ENCODE measurements at regions of chr2 and their contacts with region 1.

Region 1: GRCh38 chr2:118913803-118914645 is 28.0 kb upstream of the MARCO start:
- H3K4me3 Mint-ChIP-seq: no peak overlapping the region
- H3K27ac Mint-ChIP-seq: peak overlapping the region; percentile 59
- H3K4me1 Mint-ChIP-seq: peaks cover 38% of the 10 kb centered on the region
- H3K27me3 Mint-ChIP-seq: peaks cover 19% of the 10 kb centered on the region

Region 2: DNA sequence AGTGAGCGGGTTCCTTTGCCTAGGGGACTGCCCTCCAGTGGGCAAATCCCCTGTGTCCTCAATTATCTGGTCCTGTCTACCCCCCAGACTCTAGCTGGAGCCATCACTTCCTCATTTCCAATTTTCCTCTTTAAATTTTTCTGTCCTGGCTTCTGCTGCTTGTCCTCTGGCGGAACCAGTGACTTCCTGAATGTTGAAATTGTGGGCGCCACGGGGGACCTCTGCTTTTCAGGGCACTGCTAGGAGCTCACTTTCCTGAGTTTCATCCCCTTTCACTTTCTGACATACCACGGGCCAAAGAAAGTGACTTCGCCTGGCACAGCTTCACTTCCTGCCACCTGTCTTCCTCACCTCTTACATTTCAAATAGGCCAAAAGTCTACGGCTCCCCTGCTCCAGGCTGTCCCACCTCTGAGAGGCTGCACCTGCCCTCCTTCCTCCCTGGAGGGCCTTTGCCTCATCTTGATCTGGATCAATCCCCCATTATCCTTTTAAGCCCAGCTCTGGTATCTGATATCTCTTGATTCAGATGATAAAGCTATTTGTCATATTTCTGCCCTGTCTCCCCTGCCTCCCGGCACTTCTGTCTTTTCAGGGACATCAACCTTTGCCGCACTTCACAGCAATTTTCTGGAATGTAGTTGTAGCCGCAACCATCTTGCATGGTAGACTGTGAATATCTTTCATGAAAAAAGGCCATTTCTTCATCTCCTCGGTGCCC is 26.6 kb after region 1 on chr2:
- intact Hi-C with region 1: no loop called
- H3K4me3 Mint-ChIP-seq: peak overlapping the region; percentile 59
- H3K27ac Mint-ChIP-seq: peak overlapping the region; percentile 73
- H3K4me1 Mint-ChIP-seq: peaks cover 34% of the 10 kb centered on the region
- H3K27me3 Mint-ChIP-seq: no peaks in the 10 kb centered on the region

Region 3: GRCh38 chr2:118954297-118955060 is 40.5 kb after region 1 on chr2:
- intact Hi-C with region 1: no loop called
- H3K4me3 Mint-ChIP-seq: peak overlapping the region; percentile 45
- H3K27ac Mint-ChIP-seq: peak overlapping the region; percentile 98
- H3K4me1 Mint-ChIP-seq: peaks cover 73% of the 10 kb centered on the region
- H3K27me3 Mint-ChIP-seq: no peaks in the 10 kb centered on the region

Region 4: GRCh38 chr2:118989481-118989880 is 75.5 kb after region 1 on chr2:
- intact Hi-C with region 1: loop called (anchors 10 kb)
- H3K4me3 Mint-ChIP-seq: no peak overlapping the region
- H3K27ac Mint-ChIP-seq: no peak overlapping the region
- H3K4me1 Mint-ChIP-seq: peaks cover 66% of the 10 kb centered on the region
- H3K27me3 Mint-ChIP-seq: peaks cover 22% of the 10 kb centered on the region

Measured in dendritic cell treated with granulocyte-macrophage colony-stimulating factor and Interleukin-4, amounts not matched to agents 40 ng/mL and 50 ng/mL, for 4 days (primary cell).